Ovary (tissue), 10 donors: ENCODE measurements at regions of chr22 and their contacts with region 1.

Region 1: DNA sequence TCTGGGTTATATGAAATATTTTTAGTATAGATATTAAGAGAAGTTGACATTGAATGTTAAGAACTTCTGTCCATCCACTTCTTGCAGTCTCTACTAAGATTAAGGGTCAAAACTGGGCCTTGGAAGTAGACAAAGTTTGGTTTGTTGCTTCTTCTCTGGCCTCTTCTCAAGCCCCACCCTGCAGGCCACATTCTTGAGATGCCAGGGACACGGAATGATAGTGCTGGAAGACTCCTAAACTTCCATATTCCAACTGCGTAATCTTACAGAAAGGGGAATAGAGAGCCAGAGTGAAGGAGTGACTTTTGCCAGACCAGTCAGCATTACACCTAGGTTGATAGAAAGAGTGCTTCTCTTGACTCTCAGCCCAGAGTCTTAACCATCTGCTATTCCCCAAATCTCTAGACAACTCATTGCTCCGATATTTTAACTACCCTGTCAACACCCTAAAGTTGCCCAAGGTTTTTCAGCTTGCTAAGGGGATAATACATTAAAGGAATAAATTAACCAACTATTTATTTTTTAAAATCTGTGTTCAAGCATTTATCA is 136.4 kb upstream of the SYN3 start:
- DNase-seq: no peak
- H3K4me3 ChIP-seq: no peak overlapping the region
- H3K27ac ChIP-seq: no peak overlapping the region
- H3K4me1 ChIP-seq: no peaks in the 10 kb centered on the region
- H3K27me3 ChIP-seq: no peaks in the 10 kb centered on the region
- CTCF ChIP-seq: no peak
- EP300 ChIP-seq: no peak
- POLR2A ChIP-seq: no peak

Region 2: GRCh38 chr22:33116872-33117547 is 77.6 kb before region 1 on chr22:
- intact Hi-C with region 1: no loop called
- DNase-seq: no peak
- H3K4me3 ChIP-seq: no peak overlapping the region
- H3K27ac ChIP-seq: no peak overlapping the region
- H3K4me1 ChIP-seq: no peaks in the 10 kb centered on the region
- H3K27me3 ChIP-seq: no peaks in the 10 kb centered on the region
- CTCF ChIP-seq: no peak
- EP300 ChIP-seq: no peak
- POLR2A ChIP-seq: no peak

Region 3: DNA sequence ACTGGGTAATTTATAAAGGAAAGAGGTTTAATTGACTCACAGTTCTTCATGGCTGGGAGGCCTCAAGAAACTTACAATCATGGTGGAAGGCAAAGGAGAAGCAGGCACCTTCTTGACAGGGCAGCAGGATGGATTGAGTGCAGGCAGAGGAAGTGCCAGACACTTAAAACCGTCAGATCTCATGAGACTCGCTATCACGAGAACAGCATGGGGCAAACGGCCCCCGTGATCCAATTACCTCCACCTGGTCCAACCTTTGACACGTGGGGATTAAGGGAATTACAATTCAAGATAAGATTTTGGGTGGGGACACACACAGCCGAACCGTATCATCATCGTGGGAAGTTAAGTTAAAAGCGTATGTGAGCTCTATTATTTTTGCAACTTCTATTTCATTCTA is 65.0 kb before region 1 on chr22:
- intact Hi-C with region 1: loop called in 1 of 4 experiments (anchors 10 kb)
- DNase-seq: no peak
- H3K4me3 ChIP-seq: no peak overlapping the region
- H3K27ac ChIP-seq: no peak overlapping the region
- H3K4me1 ChIP-seq: no peaks in the 10 kb centered on the region
- H3K27me3 ChIP-seq: no peaks in the 10 kb centered on the region
- CTCF ChIP-seq: no peak
- EP300 ChIP-seq: no peak
- POLR2A ChIP-seq: no peak